Breast epithelium (tissue), 4 donors: ENCODE measurements at regions of chr4 and their contacts with region 1.

Region 1: GRCh38 chr4:156006192-156006591 is 52.5 kb upstream of the CTSO start:
- DNase-seq: no peak
- H3K4me3 ChIP-seq: no peak overlapping the region
- H3K27ac ChIP-seq: no peak overlapping the region
- H3K4me1 ChIP-seq: no peaks in the 10 kb centered on the region
- H3K27me3 ChIP-seq: no peaks in the 10 kb centered on the region
- CTCF ChIP-seq: no peak
- POLR2A ChIP-seq: no peak

Region 2: DNA sequence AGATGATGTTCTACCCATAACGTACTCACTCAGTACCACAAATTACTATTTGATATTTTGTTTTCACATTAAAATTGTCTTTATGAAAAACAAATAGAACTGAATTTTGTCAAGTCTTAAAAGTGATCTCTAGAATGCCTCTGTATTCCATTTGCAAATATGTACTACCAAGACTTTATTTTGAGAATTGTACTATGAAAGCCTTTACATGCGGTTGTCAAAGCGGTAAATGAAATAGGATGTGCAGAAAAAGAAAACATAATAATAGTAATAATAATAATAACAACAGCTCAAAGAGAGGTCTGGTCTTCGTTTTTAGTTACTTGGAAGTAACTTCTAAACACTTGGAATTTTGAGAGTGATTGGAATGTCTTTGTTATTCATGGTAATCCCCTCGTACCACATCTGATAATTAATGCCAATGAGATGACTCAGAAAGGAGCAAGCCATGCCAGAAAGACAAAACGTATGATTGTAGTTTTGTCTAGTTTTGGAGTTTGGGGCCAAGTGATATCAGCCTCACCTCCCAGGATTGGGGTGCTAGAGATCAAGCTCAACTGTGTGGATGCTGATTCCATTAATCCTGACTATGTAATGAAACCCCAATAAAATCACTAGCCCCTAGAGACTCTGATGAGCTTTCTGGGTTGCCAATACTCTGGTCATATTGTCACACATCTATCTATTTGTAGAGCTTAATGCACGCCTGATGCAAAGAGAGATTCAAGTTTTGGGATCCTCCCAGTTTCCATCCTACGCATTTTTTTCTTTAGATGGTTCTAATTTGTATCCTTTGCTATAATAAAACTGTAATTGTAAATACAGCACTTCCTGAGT is 32.3 kb before region 1 on chr4:
- intact Hi-C with region 1: loop called (anchors 2 kb)
- DNase-seq: no peak
- H3K4me3 ChIP-seq: no peak overlapping the region
- H3K27ac ChIP-seq: no peak overlapping the region
- H3K4me1 ChIP-seq: no peaks in the 10 kb centered on the region
- H3K27me3 ChIP-seq: no peaks in the 10 kb centered on the region
- CTCF ChIP-seq: no peak
- POLR2A ChIP-seq: no peak

Region 3: DNA sequence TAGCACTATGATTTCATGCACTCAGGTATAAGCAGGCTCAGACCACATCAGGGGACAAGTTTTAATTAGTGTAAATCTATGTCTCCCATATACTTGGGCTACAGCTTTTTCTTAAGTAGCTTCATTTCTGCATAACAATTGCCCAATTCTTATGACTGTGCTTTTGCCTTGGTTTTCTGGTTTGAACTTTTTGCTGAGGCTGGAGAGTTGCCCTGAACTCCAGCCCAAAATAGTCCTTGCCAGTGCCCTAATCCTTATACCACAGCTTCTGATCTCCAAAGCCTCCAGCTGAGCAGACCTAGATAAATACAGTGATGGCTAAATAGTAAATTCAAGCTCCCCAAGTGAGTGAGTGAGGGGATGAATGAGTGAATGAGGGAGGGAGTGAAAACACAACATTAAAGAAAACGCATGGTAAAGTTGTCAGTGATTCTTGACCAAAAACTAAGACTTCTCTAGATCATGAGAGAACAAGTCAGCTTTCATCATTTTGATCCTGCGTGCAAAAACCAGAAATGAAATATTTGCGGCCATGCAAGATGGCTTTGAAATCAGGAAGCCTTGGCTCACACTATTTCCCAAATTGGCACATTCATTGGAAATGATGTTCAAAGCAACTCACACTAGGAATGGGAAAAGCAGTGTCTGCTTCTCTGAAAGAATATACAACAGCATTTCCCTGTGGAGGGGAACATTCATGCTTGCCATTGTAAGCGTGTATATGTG is 384.6 kb after region 1 on chr4:
- intact Hi-C with region 1: no loop called
- DNase-seq: no peak
- H3K4me3 ChIP-seq: no peak overlapping the region
- H3K27ac ChIP-seq: no peak overlapping the region
- H3K4me1 ChIP-seq: no peaks in the 10 kb centered on the region
- H3K27me3 ChIP-seq: no peaks in the 10 kb centered on the region
- CTCF ChIP-seq: no peak
- POLR2A ChIP-seq: no peak

Region 4: DNA sequence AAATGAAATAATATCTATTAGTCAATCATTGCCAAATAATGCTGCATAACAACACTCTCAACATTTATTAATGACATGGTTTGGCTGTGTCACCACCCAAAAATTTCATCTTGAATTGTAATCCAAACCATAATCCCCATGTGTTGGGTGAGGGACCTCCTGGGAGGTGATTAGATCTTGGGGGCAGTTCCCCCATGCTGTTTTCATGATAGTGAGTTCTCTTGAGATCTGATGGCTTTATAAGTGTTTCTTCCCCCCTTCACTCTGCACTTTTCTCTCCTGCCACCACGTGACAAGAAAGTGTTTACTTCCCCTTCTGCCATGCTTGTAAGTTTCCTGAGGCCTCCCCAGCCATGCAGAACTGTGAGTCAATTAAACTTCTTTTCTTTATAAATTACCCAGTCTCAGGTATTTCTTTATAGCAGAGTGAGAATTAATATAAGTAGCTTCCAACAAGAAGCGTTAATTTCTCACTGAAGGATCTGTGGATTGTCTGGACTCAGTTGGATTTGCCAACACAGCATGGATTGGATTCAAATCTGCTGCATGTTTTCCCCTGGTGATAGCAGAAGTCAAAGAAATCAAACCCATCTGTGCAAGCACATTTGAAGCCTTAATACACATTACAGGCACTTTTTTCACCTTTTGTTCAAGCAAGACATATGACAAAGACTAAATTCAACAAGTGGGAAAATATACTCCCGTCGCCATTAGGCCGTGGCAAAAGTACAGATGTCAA is 748.8 kb after region 1 on chr4:
- intact Hi-C with region 1: no loop called
- DNase-seq: no peak
- H3K4me3 ChIP-seq: no peak overlapping the region
- H3K27ac ChIP-seq: no peak overlapping the region
- H3K4me1 ChIP-seq: no peaks in the 10 kb centered on the region
- H3K27me3 ChIP-seq: no peaks in the 10 kb centered on the region
- CTCF ChIP-seq: no peak
- POLR2A ChIP-seq: no peak